PC-3 (cell line): ENCODE measurements at regions of chr7 and their contacts with region 1.

Region 1: GRCh38 chr7:30074422-30075030 is 46.3 kb downstream of the PLEKHA8 start:
- DNase-seq: peak; percentile 70
- ATAC-seq: peak; percentile 73
- H3K4me3 ChIP-seq: no peak overlapping the region
- H3K27ac ChIP-seq: no peak overlapping the region
- H3K4me1 ChIP-seq: no peaks in the 10 kb centered on the region
- H3K27me3 ChIP-seq: no peaks in the 10 kb centered on the region
- CTCF ChIP-seq: peak; percentile 78

Region 2: DNA sequence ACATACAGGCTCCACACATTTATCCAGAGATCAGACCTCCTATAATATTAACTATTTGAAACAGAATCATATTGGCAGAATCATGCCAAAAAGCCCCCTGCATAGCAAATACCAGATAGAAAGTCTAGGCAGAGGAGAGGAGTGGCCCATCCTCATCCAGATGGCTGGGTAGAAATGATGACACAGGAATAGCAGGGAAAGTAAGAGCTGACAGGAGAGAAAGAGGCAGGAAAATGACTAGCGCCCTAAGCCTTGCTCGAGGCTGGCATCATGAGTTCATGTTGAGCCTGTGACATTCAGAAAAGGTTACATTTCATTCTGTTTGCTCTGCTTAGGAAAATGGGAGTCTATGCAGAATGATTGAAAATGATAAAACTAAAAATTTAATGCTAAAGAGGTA is 240.6 kb before region 1 on chr7:
- CTCF ChIA-PET with region 1: no interaction called
- POLR2A ChIA-PET with region 1: no interaction called
- intact Hi-C with region 1: no loop called
- DNase-seq: no peak
- ATAC-seq: no peak
- H3K4me3 ChIP-seq: no peak overlapping the region
- H3K27ac ChIP-seq: no peak overlapping the region
- H3K4me1 ChIP-seq: no peaks in the 10 kb centered on the region
- H3K27me3 ChIP-seq: no peaks in the 10 kb centered on the region
- CTCF ChIP-seq: no peak

Region 3: DNA sequence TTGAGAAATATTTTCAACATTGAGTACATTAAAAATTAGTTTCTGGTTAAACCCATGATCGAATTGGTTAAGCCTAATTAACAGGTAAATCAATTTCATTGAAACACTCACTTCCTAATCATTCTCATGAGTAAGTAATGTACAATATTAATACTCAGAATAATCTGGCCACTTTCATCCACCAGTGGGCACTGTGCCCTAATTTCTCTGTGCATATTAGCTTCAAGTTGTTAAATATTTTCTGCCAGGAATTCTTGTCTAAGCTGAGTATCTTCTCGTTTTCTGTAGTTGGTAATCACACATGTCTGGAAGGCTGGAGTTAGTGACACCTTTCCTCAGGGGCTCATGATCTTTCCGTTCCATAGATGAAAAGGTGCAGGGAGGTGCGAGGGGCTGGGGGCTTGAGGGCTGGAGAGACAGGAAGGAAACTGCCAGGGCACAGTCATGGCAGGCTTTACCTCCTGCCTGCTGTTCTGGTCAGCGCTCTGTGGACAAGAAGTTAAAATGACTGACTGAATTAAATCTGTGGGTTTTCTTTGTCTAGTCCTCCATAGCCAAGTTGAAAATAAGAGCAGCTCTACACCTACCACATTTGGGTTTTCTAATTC is 196.3 kb before region 1 on chr7:
- CTCF ChIA-PET with region 1: interaction called, 11 read pairs
- POLR2A ChIA-PET with region 1: no interaction called
- intact Hi-C with region 1: loop called (anchors 1 kb)
- DNase-seq: peak; percentile 76
- ATAC-seq: peak; percentile 74
- H3K4me3 ChIP-seq: no peak overlapping the region
- H3K27ac ChIP-seq: no peak overlapping the region
- H3K4me1 ChIP-seq: peaks cover under 1% of the 10 kb centered on the region
- H3K27me3 ChIP-seq: no peaks in the 10 kb centered on the region
- CTCF ChIP-seq: peak; percentile 83

Region 4: GRCh38 chr7:30142710-30143109 is 68.2 kb after region 1 on chr7:
- CTCF ChIA-PET with region 1: no interaction called
- POLR2A ChIA-PET with region 1: no interaction called
- intact Hi-C with region 1: loop called (anchors 5 kb)
- DNase-seq: peak; percentile 93
- ATAC-seq: peak; percentile 76
- H3K4me3 ChIP-seq: peak overlapping the region; percentile 49
- H3K27ac ChIP-seq: peak overlapping the region; percentile 68
- H3K4me1 ChIP-seq: peaks cover 33% of the 10 kb centered on the region
- H3K27me3 ChIP-seq: no peaks in the 10 kb centered on the region
- CTCF ChIP-seq: no peak

Region 5: GRCh38 chr7:30159698-30160143 is 85.2 kb after region 1 on chr7:
- CTCF ChIA-PET with region 1: no interaction called
- POLR2A ChIA-PET with region 1: no interaction called
- intact Hi-C with region 1: no loop called
- DNase-seq: peak; percentile 46
- ATAC-seq: peak; percentile 37
- H3K4me3 ChIP-seq: no peak overlapping the region
- H3K27ac ChIP-seq: no peak overlapping the region
- H3K4me1 ChIP-seq: peaks cover 31% of the 10 kb centered on the region
- H3K27me3 ChIP-seq: no peaks in the 10 kb centered on the region
- CTCF ChIP-seq: peak; percentile 54

Region 6: GRCh38 chr7:30173058-30173897 is 98.8 kb after region 1 on chr7:
- CTCF ChIA-PET with region 1: interaction called, 3 read pairs
- POLR2A ChIA-PET with region 1: no interaction called
- intact Hi-C with region 1: loop called (anchors 1 kb)
- DNase-seq: peak; percentile 94
- ATAC-seq: peak; percentile 86
- H3K4me3 ChIP-seq: no peak overlapping the region
- H3K27ac ChIP-seq: peak overlapping the region; percentile 93
- H3K4me1 ChIP-seq: peaks cover 48% of the 10 kb centered on the region
- H3K27me3 ChIP-seq: no peaks in the 10 kb centered on the region
- CTCF ChIP-seq: peak; percentile 64